Common myeloid progenitor, CD34-positive (primary cell): ENCODE measurements at regions of chr17 and their contacts with region 1.

Region 1: GRCh38 chr17:63919311-63919723 is 678 bp upstream of the GH1 start:
- DNase-seq: peak; percentile 66 to 83 (median 71)
- H3K4me3 ChIP-seq: no peak overlapping the region
- H3K27ac ChIP-seq: no peak overlapping the region
- H3K4me1 ChIP-seq: peaks cover 0 to 5% (median 0%) of the 10 kb centered on the region in 4 experiments
- H3K27me3 ChIP-seq: no peaks in the 10 kb centered on the region

Region 2: GRCh38 chr17:63464691-63465236 is 454.6 kb before region 1 on chr17:
- CTCF ChIA-PET with region 1: no interaction called
- POLR2A ChIA-PET with region 1: no interaction called
- DNase-seq: peak in 2 of 3 donors; percentile 37 to 60
- H3K4me3 ChIP-seq: no peak overlapping the region
- H3K27ac ChIP-seq: no peak overlapping the region
- H3K4me1 ChIP-seq: peaks cover 0 to 18% (median 0%) of the 10 kb centered on the region in 4 experiments
- H3K27me3 ChIP-seq: no peaks in the 10 kb centered on the region

Region 3: DNA sequence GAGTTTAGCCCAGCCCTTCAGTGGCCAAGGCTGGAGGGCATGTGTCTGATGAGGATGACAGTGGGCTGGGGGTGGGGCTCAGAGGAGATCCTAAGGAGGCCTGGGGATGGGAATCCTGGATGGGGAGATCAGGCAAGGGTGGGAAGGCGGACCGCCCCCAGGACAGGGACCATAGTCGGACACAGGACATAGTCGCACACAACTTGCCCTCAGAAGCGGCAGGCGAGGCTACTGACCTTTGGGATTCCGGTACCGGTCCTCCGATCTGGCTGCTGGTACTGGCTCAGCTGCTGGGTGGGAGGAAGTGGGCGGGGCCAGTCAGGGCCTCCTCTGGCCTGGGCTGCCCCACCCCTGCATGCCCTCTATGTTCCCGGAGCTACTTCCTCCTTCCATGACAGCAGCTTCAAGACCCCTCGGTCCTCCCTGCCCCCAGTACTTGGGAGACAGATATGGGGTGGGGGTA is 11.8 kb after region 1 on chr17:
- CTCF ChIA-PET with region 1: interaction called, 63 read pairs
- POLR2A ChIA-PET with region 1: interaction called, 3 read pairs
- DNase-seq: peak; percentile 60 to 74 (median 72)
- H3K4me3 ChIP-seq: peak overlapping the region in 6 of 7 experiments; percentile 52 to 85 (median 68)
- H3K27ac ChIP-seq: peak overlapping the region in 1 of 2 experiments; percentile 34
- H3K4me1 ChIP-seq: peaks cover 0 to 29% (median 27%) of the 10 kb centered on the region in 4 experiments
- H3K27me3 ChIP-seq: no peaks in the 10 kb centered on the region

Region 4: GRCh38 chr17:63946440-63947367 is 27.4 kb after region 1 on chr17:
- CTCF ChIA-PET with region 1: interaction called, 32 read pairs
- POLR2A ChIA-PET with region 1: no interaction called
- DNase-seq: peak; percentile 44 to 68 (median 63)
- H3K4me3 ChIP-seq: peak overlapping the region in 2 of 7 experiments; percentile 6 to 53
- H3K27ac ChIP-seq: no peak overlapping the region
- H3K4me1 ChIP-seq: peaks cover 0 to 37% (median 23%) of the 10 kb centered on the region in 4 experiments
- H3K27me3 ChIP-seq: no peaks in the 10 kb centered on the region

Region 5: DNA sequence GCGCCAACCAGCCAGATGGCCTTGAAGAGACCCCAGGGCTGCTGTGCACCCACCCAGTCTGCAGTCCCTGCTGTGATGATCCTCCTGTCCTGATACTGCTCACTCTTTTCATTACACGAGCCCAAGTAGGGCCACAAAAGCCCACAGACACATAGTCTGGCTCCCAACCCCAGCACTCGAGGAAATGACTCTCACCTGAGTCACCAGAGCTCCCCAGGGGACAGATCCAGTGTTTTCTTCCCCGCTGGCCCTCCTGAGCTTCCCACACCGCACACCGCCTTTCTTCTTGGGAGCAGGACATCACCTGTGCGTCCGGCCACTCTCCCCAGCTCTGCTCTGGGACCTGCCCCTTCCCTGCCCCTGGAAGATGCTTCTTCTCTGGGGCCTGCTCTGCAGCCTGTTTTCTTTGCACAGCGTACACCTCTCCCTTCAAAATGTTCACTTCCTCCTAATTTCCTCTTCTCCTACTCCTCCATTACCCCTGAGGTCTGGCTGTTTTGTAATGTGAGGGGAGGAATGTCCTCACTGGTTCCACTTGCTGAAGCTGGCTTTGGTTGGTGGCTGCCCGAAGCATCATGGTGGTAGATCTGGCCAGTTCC is 55.4 kb after region 1 on chr17:
- CTCF ChIA-PET with region 1: interaction called, 15 read pairs
- POLR2A ChIA-PET with region 1: no interaction called
- DNase-seq: peak in 1 of 3 donors; percentile 7
- H3K4me3 ChIP-seq: no peak overlapping the region
- H3K27ac ChIP-seq: no peak overlapping the region
- H3K4me1 ChIP-seq: peaks cover 0 to 36% (median 21%) of the 10 kb centered on the region in 4 experiments
- H3K27me3 ChIP-seq: no peaks in the 10 kb centered on the region

Region 6: GRCh38 chr17:63998050-63998720 is 78.9 kb after region 1 on chr17 and contains the start of gene PRR29:
- CTCF ChIA-PET with region 1: interaction called, 11 read pairs
- POLR2A ChIA-PET with region 1: interaction called, 4 read pairs
- DNase-seq: peak; percentile 65 to 73 (median 71)
- H3K4me3 ChIP-seq: peak within 1 kb of the TSS; percentile 54 to 90 (median 80)
- H3K27ac ChIP-seq: no peak within 1 kb of the TSS
- H3K4me1 ChIP-seq: peaks cover 0 to 35% (median 21%) of the 10 kb centered on the region in 4 experiments
- H3K27me3 ChIP-seq: no peaks in the 10 kb centered on the region